Activated CD8-positive, alpha-beta T cell treated with anti-CD3 and anti-CD28 coated beads for 36 hours (primary cell): ENCODE measurements at regions of chr20 and their contacts with region 1.

Region 1: DNA sequence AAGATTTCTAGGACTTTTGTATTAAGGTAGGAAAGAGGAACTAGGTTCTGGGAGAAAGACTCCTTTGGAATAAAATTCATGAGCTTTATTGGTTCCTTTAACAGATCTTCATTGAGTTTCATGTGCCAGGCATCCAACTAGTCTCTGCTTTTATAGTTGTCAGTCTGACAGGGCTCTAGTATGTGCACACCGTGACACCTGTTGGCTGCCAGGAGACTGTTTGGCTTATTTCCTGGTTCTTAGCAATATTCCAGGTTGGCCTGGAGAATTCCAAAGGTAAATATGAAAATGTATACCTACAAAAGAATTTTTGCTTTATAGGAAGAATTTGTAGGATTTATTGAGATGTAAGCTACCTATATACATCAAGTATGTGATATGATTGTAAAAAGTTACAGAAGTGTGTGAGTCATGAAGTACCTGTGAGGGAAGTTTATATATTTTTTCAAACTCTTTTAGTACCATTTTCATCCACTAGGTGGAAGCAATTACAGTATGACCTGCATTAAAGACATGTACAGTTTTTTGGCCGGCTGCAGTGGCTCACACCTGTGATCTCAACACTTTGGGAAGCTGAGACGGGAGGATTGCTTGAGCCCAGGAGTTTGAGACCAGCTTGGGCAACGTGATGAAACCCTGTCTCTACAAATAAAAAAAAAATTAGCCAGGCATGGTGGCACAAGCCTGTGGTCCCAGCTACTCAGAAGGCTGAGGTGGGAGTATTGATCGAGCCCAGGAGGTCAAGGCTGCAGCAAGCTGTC is 35.2 kb downstream of the NDUFAF5 start:
- DNase-seq: peak; percentile 31
- ATAC-seq: peak; percentile 71
- H3K4me3 Mint-ChIP-seq: no peak overlapping the region
- H3K27ac Mint-ChIP-seq: no peak overlapping the region
- H3K4me1 Mint-ChIP-seq: peaks cover 30% of the 10 kb centered on the region
- H3K27me3 Mint-ChIP-seq: no peaks in the 10 kb centered on the region
- CTCF ChIP-seq: peak; percentile 81

Region 2: DNA sequence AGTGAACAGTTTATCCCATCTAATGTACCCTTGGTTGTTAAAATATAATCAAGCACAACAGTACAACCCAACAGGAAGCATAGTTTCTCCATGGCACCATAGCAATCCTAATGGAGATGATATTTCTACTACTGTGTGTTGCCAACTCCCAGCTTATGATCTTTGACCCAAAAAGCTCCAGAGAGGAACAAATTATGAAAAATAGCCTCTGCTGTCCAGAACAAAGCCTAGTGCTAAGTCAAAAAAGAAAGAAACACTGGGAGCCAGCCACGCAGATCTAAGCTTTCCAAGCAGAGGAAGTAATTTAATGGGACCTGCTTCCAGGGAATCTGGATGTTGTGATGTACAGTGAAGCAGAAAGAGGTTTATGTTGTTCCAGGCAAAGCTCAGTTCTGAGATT is 129.1 kb before region 1 on chr20:
- CTCF ChIA-PET with region 1: no interaction called
- POLR2A ChIA-PET with region 1: no interaction called
- intact Hi-C with region 1: no loop called
- DNase-seq: no peak
- ATAC-seq: no peak
- H3K4me3 Mint-ChIP-seq: no peak overlapping the region
- H3K27ac Mint-ChIP-seq: no peak overlapping the region
- H3K4me1 Mint-ChIP-seq: no peaks in the 10 kb centered on the region
- H3K27me3 Mint-ChIP-seq: peaks cover 3% of the 10 kb centered on the region
- CTCF ChIP-seq: no peak

Region 3: GRCh38 chr20:13784893-13785715 is 35.0 kb before region 1 on chr20 and contains the starts of genes ESF1 and NDUFAF5:
- CTCF ChIA-PET with region 1: interaction called, 13 read pairs
- POLR2A ChIA-PET with region 1: interaction called, 6 read pairs
- intact Hi-C with region 1: no loop called
- DNase-seq: peak; percentile 97
- ATAC-seq: peak; percentile 99
- H3K4me3 Mint-ChIP-seq: peak within 1 kb of the TSS; percentile 100
- H3K27ac Mint-ChIP-seq: peak within 1 kb of the TSS; percentile 98
- H3K4me1 Mint-ChIP-seq: peaks cover 52% of the 10 kb centered on the region
- H3K27me3 Mint-ChIP-seq: no peaks in the 10 kb centered on the region
- CTCF ChIP-seq: no peak
- total RNA-seq, gene ESF1: 19.9 to 20.4 TPM
- total RNA-seq, gene NDUFAF5: 25.9 to 28.4 TPM

Region 4: DNA sequence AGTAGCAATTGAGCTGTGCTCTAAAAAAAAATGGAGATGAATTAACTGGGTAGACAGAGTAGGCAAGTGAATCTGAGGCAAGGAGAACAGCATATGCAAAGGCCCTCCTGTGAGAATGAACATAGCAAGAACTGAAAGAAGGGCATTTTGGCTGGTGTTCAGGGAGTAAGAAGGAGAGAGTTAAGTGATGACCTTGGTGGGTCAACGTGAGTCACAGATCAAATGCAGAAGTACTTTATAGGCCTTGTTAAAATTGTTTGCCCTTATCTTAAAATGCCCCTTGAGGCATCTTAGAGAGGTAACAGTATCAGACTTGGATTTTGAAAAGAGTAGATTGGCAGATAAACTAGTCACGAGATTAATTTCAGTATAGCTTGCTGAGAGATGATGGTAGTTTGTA is 10.7 kb before region 1 on chr20:
- CTCF ChIA-PET with region 1: interaction called, 10 read pairs
- POLR2A ChIA-PET with region 1: no interaction called
- intact Hi-C with region 1: no loop called
- DNase-seq: no peak
- ATAC-seq: no peak
- H3K4me3 Mint-ChIP-seq: no peak overlapping the region
- H3K27ac Mint-ChIP-seq: no peak overlapping the region
- H3K4me1 Mint-ChIP-seq: peaks cover 8% of the 10 kb centered on the region
- H3K27me3 Mint-ChIP-seq: no peaks in the 10 kb centered on the region
- CTCF ChIP-seq: no peak

Region 5: DNA sequence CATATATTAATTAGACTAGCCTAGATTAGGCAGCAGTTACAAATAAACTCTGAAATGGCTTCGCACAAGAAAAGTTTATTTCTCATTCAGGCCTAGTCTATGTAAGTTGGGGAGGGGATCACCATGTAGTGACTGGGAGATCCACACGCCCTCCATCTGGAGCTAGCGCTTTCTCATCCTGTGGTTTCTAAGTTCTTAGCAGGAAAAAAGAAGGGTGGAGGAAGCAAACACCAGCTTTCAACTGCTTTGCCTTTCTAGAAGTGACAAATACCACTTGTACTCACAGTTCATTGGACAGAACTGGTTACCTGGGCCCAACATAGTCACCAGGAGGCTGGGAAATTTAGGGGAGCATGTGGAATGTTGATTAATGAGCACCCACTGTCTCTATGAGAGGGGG is 11.4 kb after region 1 on chr20:
- CTCF ChIA-PET with region 1: interaction called, 11 read pairs
- POLR2A ChIA-PET with region 1: interaction called, 3 read pairs
- intact Hi-C with region 1: no loop called
- DNase-seq: no peak
- ATAC-seq: no peak
- H3K4me3 Mint-ChIP-seq: no peak overlapping the region
- H3K27ac Mint-ChIP-seq: no peak overlapping the region
- H3K4me1 Mint-ChIP-seq: no peaks in the 10 kb centered on the region
- H3K27me3 Mint-ChIP-seq: peaks cover 7% of the 10 kb centered on the region
- CTCF ChIP-seq: no peak

Region 6: DNA sequence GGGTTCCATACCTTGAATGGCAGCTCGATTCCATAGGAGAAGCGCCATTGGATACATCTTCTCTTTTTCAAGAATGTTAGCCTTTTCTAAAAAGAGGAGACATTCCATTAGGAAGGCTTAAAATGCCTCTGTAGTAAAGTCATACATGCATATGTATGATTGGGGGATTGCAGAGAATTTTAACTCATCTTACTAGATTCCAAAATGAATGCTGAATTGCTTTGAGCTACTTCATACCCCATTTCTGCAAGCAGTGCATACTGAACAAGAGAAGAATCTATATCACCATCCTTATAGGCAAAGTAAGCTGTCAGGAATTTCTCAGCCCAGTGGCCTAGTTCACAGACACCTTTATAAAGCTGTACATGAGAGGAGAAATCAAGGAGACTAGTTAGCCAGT is 45.1 kb after region 1 on chr20:
- CTCF ChIA-PET with region 1: no interaction called
- POLR2A ChIA-PET with region 1: no interaction called
- intact Hi-C with region 1: no loop called
- DNase-seq: no peak
- ATAC-seq: no peak
- H3K4me3 Mint-ChIP-seq: no peak overlapping the region
- H3K27ac Mint-ChIP-seq: no peak overlapping the region
- H3K4me1 Mint-ChIP-seq: no peaks in the 10 kb centered on the region
- H3K27me3 Mint-ChIP-seq: peaks cover 2% of the 10 kb centered on the region
- CTCF ChIP-seq: no peak

Region 7: DNA sequence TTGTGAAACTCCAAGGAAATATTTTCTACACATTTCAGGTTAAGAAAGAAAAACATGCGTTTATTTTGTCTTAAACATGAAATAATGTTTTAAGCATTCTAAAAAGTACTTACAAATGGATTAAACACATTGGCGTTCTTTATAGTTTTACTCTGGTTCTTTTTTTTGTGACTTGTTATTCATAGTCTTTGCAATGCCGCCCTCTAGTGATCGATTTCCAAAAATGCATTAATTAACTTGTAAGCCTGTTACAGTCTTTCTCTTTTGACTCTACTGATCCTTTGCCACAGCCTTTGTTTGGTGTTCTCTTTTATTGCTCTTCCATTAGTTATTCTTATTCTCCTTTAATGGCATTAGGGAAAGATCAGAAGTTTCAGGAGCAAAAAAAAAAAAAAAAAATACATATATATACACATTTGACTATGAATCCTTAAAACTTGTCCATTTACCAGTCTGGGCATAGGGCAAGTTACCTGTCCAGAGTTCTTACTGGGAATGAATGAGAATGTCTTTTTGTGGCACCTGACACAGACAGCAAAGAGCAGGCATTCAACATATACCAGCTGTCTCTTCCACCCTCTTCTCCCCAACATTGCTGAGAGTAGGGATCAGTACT is 235.2 kb after region 1 on chr20:
- CTCF ChIA-PET with region 1: interaction called, 36 read pairs
- POLR2A ChIA-PET with region 1: no interaction called
- intact Hi-C with region 1: loop called (anchors 5 kb)
- DNase-seq: peak; percentile 18
- ATAC-seq: no peak
- H3K4me3 Mint-ChIP-seq: no peak overlapping the region
- H3K27ac Mint-ChIP-seq: no peak overlapping the region
- H3K4me1 Mint-ChIP-seq: no peaks in the 10 kb centered on the region
- H3K27me3 Mint-ChIP-seq: peaks cover 2% of the 10 kb centered on the region
- CTCF ChIP-seq: peak; percentile 72